ENCODE measurements at regions of chr16 and their contacts with region 1.

Region 1: DNA sequence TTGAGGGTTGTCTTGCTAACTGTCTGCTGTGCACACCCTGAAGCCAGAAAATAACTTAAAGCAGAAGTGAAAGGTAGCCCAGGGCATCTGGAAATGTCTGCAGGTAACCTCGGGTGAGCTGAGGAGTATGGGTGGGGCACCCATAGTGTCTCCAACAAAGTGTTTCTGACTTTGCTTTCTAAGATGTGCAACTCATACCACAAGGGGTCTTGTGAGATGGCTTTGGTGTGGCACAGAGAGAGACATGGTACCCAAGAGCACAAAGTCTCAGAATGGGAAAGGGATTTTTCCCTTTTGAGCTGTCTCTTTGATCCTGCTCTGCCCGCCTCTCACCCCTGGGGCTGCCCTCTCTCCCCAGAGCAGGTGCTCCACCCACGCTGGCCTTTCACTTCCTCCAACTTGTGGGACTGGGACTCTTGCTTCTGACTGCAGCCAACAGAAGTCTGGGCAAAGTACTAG is 6.9 kb downstream of the CHD9 start:
- DNase-seq: no peak
- ATAC-seq: no peak
- H3K4me3 ChIP-seq: no peak overlapping the region
- H3K27ac ChIP-seq: no peak overlapping the region
- H3K4me1 ChIP-seq: no peaks in the 10 kb centered on the region
- H3K27me3 ChIP-seq: no peaks in the 10 kb centered on the region
- CTCF ChIP-seq: no peak

Region 2: DNA sequence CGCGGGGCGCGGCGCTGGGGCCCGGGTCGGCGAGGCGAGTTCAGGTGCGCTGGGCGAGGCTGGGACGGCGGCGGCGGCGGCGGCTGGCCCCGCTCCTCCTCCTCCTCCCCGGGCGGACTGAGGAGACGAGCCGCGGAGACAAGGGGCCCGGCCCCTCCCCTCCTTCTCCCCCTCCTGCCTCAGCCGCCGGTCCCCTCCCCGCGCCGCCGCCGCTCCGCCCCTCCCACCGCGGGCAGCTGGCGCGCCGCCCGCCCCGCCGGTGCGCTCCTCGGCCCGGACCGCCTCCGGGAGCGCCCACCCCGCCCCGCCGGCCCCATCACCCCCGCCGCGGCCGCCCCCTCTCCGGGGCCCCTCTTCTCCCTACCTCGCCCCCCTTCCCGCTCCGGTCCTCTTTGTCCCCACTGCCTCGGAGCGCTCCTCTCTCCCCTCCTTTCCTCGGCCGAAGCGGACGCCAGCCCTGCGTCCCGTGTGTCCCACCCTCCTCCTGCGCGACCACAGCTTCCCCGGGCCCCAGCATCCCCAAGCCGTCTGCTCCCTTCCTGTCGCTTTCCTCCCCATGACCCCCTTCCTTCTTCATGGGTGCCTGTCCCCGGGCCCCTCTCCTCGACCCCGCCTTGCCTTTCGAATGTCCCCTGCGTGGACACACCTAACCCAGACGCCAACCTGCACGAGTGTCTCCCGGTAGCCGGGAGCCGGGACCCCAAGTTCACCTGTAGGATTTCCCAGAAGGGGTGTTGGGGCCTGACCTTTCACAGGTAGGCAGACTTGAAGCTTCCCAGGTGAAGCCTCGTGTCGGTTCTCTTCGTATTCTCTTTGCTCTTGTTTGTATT is 514.5 kb before region 1 on chr16 and contains the start of gene TOX3:
- CTCF ChIA-PET with region 1: no interaction called
- POLR2A ChIA-PET with region 1: interaction called, 10 read pairs
- in situ Hi-C with region 1: no loop called
- intact Hi-C with region 1: no loop called
- DNase-seq: no peak
- ATAC-seq: peak; percentile 79
- H3K4me3 ChIP-seq: peak within 1 kb of the TSS; percentile 31 to 60
- H3K27ac ChIP-seq: no peak within 1 kb of the TSS
- H3K4me1 ChIP-seq: no peaks in the 10 kb centered on the region
- H3K27me3 ChIP-seq: peaks cover 4% of the 10 kb centered on the region; the same call in 1 of the 2 replicates
- CTCF ChIP-seq: no peak
- total RNA-seq, gene TOX3: 3.4 TPM

Region 3: GRCh38 chr16:53041320-53042051 is 20.2 kb before region 1 on chr16:
- CTCF ChIA-PET with region 1: no interaction called
- POLR2A ChIA-PET with region 1: no interaction called
- in situ Hi-C with region 1: no loop called
- intact Hi-C with region 1: no loop called
- DNase-seq: no peak
- ATAC-seq: no peak
- H3K4me3 ChIP-seq: no peak overlapping the region
- H3K27ac ChIP-seq: no peak overlapping the region
- H3K4me1 ChIP-seq: no peaks in the 10 kb centered on the region
- H3K27me3 ChIP-seq: no peaks in the 10 kb centered on the region
- CTCF ChIP-seq: no peak

Region 4: GRCh38 chr16:53159781-53160436 is 98.2 kb after region 1 on chr16:
- CTCF ChIA-PET with region 1: no interaction called
- POLR2A ChIA-PET with region 1: no interaction called
- in situ Hi-C with region 1: no loop called
- intact Hi-C with region 1: no loop called
- DNase-seq: peak; percentile 7
- ATAC-seq: 0 out of 2 replicates have a peak, but pooled peaks have one; percentile 63
- H3K4me3 ChIP-seq: no peak overlapping the region
- H3K27ac ChIP-seq: no peak overlapping the region
- H3K4me1 ChIP-seq: no peaks in the 10 kb centered on the region
- H3K27me3 ChIP-seq: no peaks in the 10 kb centered on the region
- CTCF ChIP-seq: peak; percentile 72

Measured in Panc1 (cell line).